ENCODE measurements at regions of chr2 and their contacts with region 1.

Region 1: GRCh38 chr2:65164426-65164891 is 34.6 kb upstream of the RAB1A start:
- DNase-seq: no peak
- H3K4me3 ChIP-seq: no peak overlapping the region
- H3K27ac ChIP-seq: peak overlapping the region; percentile 22
- H3K4me1 ChIP-seq: peaks cover 71% of the 10 kb centered on the region
- CTCF ChIP-seq: no peak

Region 2: DNA sequence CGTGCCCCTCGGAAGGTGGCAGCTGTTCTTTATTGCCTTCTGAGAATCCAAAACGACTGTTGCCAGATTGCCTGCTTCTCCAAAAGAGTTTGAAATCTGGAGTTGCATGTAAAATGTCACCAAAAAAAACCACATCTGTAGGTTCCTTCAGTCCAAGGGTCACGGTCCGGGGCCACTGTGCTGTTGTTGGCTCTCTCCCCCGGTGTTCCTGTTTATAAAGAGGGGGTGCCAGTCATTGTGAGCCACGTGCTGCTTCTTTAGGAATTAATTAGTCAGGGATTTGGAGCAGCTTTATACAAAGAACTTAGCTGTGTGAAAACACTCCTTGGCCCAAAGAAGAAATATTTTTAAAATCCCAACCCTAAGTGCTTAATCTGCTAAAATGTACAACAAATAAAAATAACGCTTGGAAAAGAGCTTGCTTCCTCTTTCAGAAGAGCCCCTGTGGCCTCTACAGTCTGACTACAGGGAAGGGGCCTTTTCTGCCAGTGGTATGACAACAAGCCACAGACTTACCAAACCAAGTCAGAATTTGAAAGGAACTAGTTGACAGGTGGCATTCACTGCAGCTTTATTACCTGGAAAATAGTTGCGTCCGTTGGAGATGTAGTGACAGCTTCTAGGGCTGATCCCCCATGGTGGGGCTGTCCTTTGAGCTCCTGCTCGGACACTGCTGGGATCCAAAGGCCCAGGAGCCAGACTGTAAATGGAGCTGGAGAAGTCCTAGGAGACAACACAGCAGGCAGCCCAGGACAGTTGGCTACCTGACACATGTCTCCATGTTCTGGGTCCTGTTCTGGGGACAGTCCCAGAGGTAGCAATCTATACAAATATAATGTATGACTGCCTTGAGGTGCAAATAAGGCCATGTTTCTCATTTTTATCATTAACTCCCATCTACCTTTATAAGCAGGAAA is 259.8 kb before region 1 on chr2:
- CTCF ChIA-PET with region 1: no interaction called
- POLR2A ChIA-PET with region 1: no interaction called
- intact Hi-C with region 1: no loop called
- DNase-seq: no peak
- H3K4me3 ChIP-seq: no peak overlapping the region
- H3K27ac ChIP-seq: peak overlapping the region; percentile 10
- H3K4me1 ChIP-seq: peaks cover 29% of the 10 kb centered on the region
- CTCF ChIP-seq: no peak

Region 3: DNA sequence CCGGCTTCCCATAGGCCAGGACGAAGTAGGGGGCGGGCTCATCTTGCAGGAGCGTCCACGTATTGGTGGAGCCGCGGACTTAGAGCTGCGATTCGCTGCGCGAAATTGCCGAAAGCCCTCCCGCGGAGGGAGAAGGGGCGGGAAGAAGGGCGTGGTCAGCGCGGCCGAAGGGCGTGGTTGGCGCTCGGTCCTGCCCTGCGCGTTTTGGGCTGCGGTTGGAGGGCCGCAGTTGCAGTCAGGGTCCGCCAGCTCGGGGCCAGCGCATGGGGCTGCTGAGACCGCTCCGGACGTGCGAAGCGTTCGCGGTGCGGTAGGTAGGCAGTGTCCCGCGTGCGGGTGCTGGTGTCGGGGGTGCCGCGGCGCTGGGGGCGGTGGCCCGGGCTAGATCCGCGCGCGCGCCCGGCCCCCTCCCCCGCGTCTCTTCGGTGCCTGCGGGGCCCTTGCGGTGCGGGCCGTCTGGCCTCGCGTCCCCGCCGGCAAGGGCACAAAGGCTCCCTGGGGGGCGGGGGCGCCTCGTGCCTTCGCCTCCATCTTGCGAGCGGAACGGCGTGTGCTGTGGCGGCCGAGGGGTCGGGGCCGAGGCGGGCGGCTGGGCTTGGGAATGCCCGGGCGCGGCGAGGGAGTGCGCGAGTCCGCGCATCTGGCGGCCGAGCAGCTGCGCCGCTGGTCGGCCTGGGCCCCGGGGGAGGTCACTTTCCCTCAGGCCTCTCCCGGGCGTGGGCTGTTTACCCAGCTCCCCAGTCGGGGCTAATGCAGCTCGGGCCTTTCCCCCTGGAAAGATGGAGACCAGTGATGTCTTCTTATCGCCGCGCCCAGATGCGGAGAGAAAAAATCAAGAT is 108.0 kb before region 1 on chr2 and contains the start of gene CEP68:
- CTCF ChIA-PET with region 1: interaction called, 11 read pairs
- POLR2A ChIA-PET with region 1: interaction called, 16 read pairs
- intact Hi-C with region 1: no loop called
- DNase-seq: peak; percentile 99
- H3K4me3 ChIP-seq: peak within 1 kb of the TSS; percentile 82
- H3K27ac ChIP-seq: peak within 1 kb of the TSS; percentile 56
- H3K4me1 ChIP-seq: peaks cover 68% of the 10 kb centered on the region
- CTCF ChIP-seq: no peak
- total RNA-seq, gene CEP68: 7.3 and 8.7 TPM in 2 replicates

Region 4: DNA sequence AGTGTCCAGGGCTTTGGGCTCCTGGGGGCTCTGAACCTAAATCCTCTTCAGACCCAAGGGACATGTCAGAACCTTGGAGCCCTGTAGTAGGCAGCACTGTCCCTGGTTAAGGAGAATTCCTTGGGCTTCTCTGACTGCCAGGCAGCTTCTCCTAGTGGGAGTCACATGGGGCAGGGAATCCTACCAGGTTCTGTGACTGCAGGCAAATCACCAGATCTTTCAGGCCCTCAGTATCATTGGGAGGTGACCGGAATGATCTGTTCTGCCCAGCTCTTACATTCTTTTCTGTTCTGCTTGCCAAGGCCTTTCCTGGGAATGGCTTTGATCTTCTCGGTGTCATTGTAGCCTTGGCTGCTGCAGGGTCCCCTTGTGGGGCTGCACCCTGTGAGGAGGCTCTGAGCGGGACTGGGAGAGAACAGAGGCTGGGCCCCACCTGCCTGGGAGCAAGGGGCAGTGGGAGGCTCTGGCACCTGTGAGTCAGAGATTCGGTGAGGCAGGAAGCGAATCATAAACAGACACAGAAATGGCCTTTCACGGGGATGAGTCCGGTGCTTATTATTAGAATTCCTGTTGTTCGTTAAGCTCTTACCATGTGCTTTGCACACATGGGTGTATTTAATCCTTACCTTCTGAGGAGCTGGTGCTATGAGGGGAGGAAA is 94.2 kb before region 1 on chr2:
- CTCF ChIA-PET with region 1: interaction called, 28 read pairs
- POLR2A ChIA-PET with region 1: interaction called, 22 read pairs
- intact Hi-C with region 1: loop called (anchors 1 kb)
- DNase-seq: peak; percentile 76
- H3K4me3 ChIP-seq: peak overlapping the region; percentile 15
- H3K27ac ChIP-seq: peak overlapping the region; percentile 83
- H3K4me1 ChIP-seq: peaks cover 78% of the 10 kb centered on the region
- CTCF ChIP-seq: 0 out of 2 replicates have a peak, but pooled peaks have one; percentile 28

Measured in OCI-LY7 (cell line).